Common myeloid progenitor, CD34-positive (primary cell): ENCODE measurements at regions of chr12 and their contacts with region 1.

Region 1: GRCh38 chr12:80269803-80270552 is 170.6 kb downstream of the OTOGL start:
- DNase-seq: peak; percentile 29 to 58 (median 46)
- H3K4me3 ChIP-seq: no peak overlapping the region
- H3K27ac ChIP-seq: no peak overlapping the region
- H3K4me1 ChIP-seq: peaks cover 0 to under 1% (median 0%) of the 10 kb centered on the region in 4 experiments
- H3K27me3 ChIP-seq: no peaks in the 10 kb centered on the region

Region 2: GRCh38 chr12:80186727-80187217 is 83.2 kb before region 1 on chr12:
- CTCF ChIA-PET with region 1: interaction called, 204 read pairs
- POLR2A ChIA-PET with region 1: no interaction called
- DNase-seq: peak; percentile 82 to 85 (median 84)
- H3K4me3 ChIP-seq: no peak overlapping the region
- H3K27ac ChIP-seq: peak overlapping the region; percentile 62 to 83
- H3K4me1 ChIP-seq: peaks cover 0 to 18% (median 7%) of the 10 kb centered on the region in 4 experiments
- H3K27me3 ChIP-seq: no peaks in the 10 kb centered on the region

Region 3: DNA sequence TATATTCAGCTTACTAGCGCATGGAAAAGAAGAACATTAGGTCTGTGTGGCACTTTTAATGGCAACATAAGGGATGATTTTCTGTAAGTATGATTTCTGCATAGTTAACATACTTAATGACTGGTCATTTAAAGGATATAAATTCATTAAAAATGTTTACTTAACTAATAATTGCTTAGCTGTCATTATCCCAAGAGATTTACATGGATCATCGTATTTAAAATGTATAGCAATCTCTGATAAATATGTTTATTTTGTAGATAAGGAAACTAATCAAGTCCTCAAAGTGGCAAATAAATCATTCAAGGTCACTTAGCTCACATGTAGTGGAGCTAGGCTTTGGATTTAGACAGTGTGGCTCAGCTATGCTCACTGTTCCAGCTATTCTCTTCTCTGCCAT is 12.1 kb before region 1 on chr12:
- CTCF ChIA-PET with region 1: interaction called, 17 read pairs
- POLR2A ChIA-PET with region 1: no interaction called
- DNase-seq: no peak
- H3K4me3 ChIP-seq: no peak overlapping the region
- H3K27ac ChIP-seq: no peak overlapping the region
- H3K4me1 ChIP-seq: peaks cover 0 to 3% (median 0%) of the 10 kb centered on the region in 4 experiments
- H3K27me3 ChIP-seq: no peaks in the 10 kb centered on the region

Region 4: GRCh38 chr12:80400571-80400991 is 130.6 kb after region 1 on chr12:
- CTCF ChIA-PET with region 1: no interaction called
- POLR2A ChIA-PET with region 1: no interaction called
- DNase-seq: no peak
- H3K4me3 ChIP-seq: peak overlapping the region in 3 of 7 experiments; percentile 13 to 39 (median 22)
- H3K27ac ChIP-seq: no peak overlapping the region
- H3K4me1 ChIP-seq: peaks cover 0 to 7% (median 1%) of the 10 kb centered on the region in 4 experiments
- H3K27me3 ChIP-seq: peaks cover 5 to 23% (median 9%) of the 10 kb centered on the region in 5 experiments